ENCODE measurements at regions of chr10 and their contacts with region 1.

Region 1: DNA sequence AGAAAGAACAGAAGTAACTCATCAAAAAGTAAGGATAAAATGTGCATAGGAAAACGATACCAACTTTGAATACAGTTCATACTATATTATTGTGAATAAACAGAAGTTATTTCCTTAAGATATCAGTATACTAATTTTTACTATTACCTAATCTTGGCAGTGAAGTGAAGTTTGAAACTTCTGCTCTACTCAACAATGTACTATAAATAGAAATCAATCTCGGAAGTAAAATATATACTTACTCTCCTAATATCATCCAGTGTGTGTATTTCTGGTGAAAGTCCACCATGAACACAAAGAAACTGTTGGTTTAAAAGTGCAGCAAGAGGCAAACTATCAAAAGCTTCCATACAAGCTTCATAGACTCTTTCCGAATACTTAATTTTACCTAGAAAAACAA is 24.6 kb downstream of the PPP3CB start:
- DNase-seq: no peak
- ATAC-seq: no peak
- H3K4me3 Mint-ChIP-seq: no peak overlapping the region
- H3K27ac Mint-ChIP-seq: no peak overlapping the region
- H3K4me1 Mint-ChIP-seq: peaks cover 19% of the 10 kb centered on the region
- H3K27me3 Mint-ChIP-seq: no peaks in the 10 kb centered on the region
- CTCF ChIP-seq: no peak

Region 2: GRCh38 chr10:73413528-73414229 is 57.5 kb before region 1 on chr10 and contains the start of gene ANXA7:
- CTCF ChIA-PET with region 1: no interaction called
- POLR2A ChIA-PET with region 1: no interaction called
- intact Hi-C with region 1: no loop called
- DNase-seq: peak; percentile 86
- ATAC-seq: peak; percentile 93
- H3K4me3 Mint-ChIP-seq: peak within 1 kb of the TSS; percentile 92
- H3K27ac Mint-ChIP-seq: peak within 1 kb of the TSS; percentile 86
- H3K4me1 Mint-ChIP-seq: peaks cover 56% of the 10 kb centered on the region
- H3K27me3 Mint-ChIP-seq: no peaks in the 10 kb centered on the region
- CTCF ChIP-seq: no peak
- total RNA-seq, gene ANXA7: 150 TPM in 2 replicates

Region 3: GRCh38 chr10:73424516-73424915 is 46.7 kb before region 1 on chr10:
- CTCF ChIA-PET with region 1: no interaction called
- POLR2A ChIA-PET with region 1: no interaction called
- intact Hi-C with region 1: no loop called
- DNase-seq: no peak
- ATAC-seq: no peak
- H3K4me3 Mint-ChIP-seq: no peak overlapping the region
- H3K27ac Mint-ChIP-seq: no peak overlapping the region
- H3K4me1 Mint-ChIP-seq: peaks cover 14% of the 10 kb centered on the region
- H3K27me3 Mint-ChIP-seq: no peaks in the 10 kb centered on the region
- CTCF ChIP-seq: no peak

Region 4: DNA sequence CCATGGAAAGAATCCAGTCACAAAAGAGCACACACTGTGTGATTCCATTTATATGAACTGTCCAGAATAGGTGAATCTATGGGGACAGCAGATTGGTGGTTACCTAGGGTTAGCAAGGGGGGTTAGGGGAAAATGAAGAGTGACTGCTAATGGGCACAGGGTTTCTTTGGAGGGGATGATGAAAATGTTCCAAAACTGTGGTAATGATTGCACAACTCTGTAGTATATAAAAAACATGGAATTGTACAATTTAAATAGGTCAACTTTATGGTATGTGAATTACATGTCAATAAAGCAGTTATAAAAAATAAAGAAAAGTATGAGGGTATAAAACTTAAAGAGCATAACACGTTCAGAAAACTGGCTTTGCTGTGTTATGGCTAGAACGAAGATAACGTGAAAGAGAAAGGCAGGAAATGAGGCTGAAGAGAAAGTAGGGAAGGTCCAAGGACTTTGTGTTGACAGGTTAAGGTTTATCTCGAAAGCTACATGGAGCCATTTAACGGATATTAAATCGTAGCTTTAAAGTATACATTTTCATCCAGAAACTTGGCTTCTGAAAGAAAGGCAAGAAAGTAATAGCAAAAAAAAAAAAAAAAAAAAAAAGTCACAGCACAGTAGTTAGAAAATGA is 11.4 kb before region 1 on chr10:
- CTCF ChIA-PET with region 1: no interaction called
- POLR2A ChIA-PET with region 1: interaction called, 10 read pairs
- intact Hi-C with region 1: no loop called
- DNase-seq: no peak
- ATAC-seq: no peak
- H3K4me3 Mint-ChIP-seq: no peak overlapping the region
- H3K27ac Mint-ChIP-seq: no peak overlapping the region
- H3K4me1 Mint-ChIP-seq: no peaks in the 10 kb centered on the region
- H3K27me3 Mint-ChIP-seq: no peaks in the 10 kb centered on the region
- CTCF ChIP-seq: no peak